HAP-1 (cell line): ENCODE measurements at regions of chr12 and their contacts with region 1.

Region 1: GRCh38 chr12:84874125-84874824 is 38.3 kb downstream of the SLC6A15 start:
- DNase-seq: peak in 1 of 2 experiments; percentile 81
- H3K4me3 ChIP-seq: no peak overlapping the region
- H3K4me1 ChIP-seq: peaks cover 4% of the 10 kb centered on the region; the same call in 1 of the 2 replicates
- H3K27me3 ChIP-seq: no peaks in the 10 kb centered on the region

Region 2: DNA sequence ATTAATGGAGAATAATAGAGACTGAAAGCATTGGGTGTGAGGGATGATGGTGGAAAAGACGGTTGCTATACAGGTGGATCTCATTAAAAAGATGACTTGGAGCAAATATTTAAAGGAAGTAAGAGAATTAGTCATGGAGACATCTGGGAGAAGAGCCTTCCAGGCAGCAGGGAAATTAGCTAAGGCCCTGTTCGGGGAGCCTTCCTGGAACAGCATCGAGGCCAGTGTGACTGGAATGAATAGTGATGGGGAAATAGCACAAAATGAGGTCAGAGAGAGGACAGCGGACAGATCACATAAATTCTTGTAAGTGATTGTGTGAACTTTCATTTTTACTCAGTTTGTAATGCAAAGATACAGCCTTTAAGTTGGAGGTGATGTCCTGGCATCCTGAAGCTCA is 804.0 kb before region 1 on chr12:
- in situ Hi-C with region 1: no loop called
- DNase-seq: no peak
- H3K4me3 ChIP-seq: no peak overlapping the region
- H3K4me1 ChIP-seq: peaks cover 2% of the 10 kb centered on the region; the same call in 1 of the 2 replicates
- H3K27me3 ChIP-seq: no peaks in the 10 kb centered on the region

Region 3: GRCh38 chr12:85029456-85029855 is 155.2 kb after region 1 on chr12:
- in situ Hi-C with region 1: loop called (anchors 5 kb)
- DNase-seq: peak in 1 of 2 experiments; percentile 71
- H3K4me3 ChIP-seq: no peak overlapping the region
- H3K4me1 ChIP-seq: no peaks in the 10 kb centered on the region
- H3K27me3 ChIP-seq: no peaks in the 10 kb centered on the region

Region 4: GRCh38 chr12:85076688-85077430 is 202.6 kb after region 1 on chr12:
- in situ Hi-C with region 1: no loop called
- DNase-seq: peak in 1 of 2 experiments; percentile 63
- H3K4me3 ChIP-seq: no peak overlapping the region
- H3K4me1 ChIP-seq: no peaks in the 10 kb centered on the region
- H3K27me3 ChIP-seq: no peaks in the 10 kb centered on the region